ENCODE measurements at regions of chr10 and their contacts with region 1.

Region 1: DNA sequence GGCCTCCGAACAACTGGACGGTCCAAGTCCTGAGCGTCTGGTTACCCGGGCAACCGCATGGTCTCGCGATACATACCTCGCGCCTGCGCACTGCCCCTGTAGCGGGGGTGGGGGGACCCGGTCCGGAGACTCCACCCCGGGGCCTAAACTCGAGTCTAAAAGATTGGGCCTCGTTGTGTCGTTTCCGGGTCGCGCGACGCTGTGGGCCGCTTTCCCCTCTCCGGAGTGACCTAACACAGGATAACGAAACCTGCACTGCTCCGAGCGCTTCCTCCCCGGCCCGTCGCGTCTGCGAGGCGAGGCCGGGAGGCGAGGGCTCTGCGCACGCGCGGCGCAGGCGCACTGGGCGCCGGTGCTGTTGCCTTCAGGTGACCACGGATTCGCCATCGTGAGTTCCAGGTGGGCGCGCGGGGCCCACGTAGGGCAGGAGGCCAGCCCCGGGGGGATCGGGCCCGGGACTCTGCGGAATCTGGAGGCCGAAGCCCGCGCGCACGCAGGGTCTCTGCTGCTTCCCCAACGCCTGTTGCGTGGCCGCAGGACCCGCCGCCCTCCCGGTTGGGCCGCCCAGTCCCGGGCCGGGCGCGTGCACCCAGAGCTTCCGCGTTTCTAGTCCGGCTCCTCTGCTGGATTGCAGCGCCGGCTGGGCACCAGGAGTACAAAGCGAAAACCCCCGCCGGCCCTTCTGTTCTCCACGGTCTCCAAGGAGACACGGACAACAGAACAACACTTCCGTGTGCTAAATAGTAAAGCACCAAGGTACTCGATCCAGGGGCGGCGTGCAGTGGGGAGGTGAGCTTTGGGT is at the start of gene RPP38:
- DNase-seq: peak; percentile 97
- H3K4me3 ChIP-seq: peak within 1 kb of the TSS; percentile 81 to 93
- H3K27ac ChIP-seq: peak within 1 kb of the TSS; percentile 94 to 98
- H3K4me1 ChIP-seq: peaks cover 7% of the 10 kb centered on the region
- H3K27me3 ChIP-seq: no peaks in the 10 kb centered on the region
- CTCF ChIP-seq: peak in 1 of 3 experiments; percentile 3
- POLR2A ChIP-seq: no peak
- total RNA-seq, gene RPP38: 30.3 to 41.4 TPM

Region 2: GRCh38 chr10:14959276-14960057 is 137.7 kb before region 1 on chr10 and contains the start of gene MEIG1:
- intact Hi-C with region 1: loop called (anchors 10 kb)
- DNase-seq: peak; percentile 95
- H3K4me3 ChIP-seq: peak within 1 kb of the TSS; percentile 82
- H3K27ac ChIP-seq: peak within 1 kb of the TSS; percentile 93 to 98
- H3K4me1 ChIP-seq: peaks cover 3% of the 10 kb centered on the region
- H3K27me3 ChIP-seq: no peaks in the 10 kb centered on the region
- CTCF ChIP-seq: no peak
- POLR2A ChIP-seq: no peak
- total RNA-seq, gene MEIG1: 3.6 to 7.8 TPM

Region 3: DNA sequence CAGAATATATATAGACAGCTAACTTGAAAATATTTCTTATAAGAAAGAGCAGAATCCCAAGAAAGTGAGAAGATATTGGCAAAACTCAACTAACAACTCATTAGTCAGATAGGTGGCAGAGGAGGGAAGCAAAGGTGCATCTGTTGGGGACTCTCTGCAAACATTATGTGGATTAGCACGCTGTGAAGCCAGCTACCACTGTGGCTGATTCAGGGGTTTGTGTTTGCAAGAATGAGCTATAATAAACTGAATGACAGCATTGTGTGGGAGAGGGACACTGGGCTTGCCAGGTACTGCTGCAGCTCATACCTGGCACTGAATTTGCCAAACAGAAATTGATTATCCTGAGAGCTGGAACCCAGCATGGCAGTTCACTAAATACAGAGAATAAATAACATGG is 933.4 kb after region 1 on chr10:
- intact Hi-C with region 1: no loop called
- DNase-seq: no peak
- H3K4me3 ChIP-seq: no peak overlapping the region
- H3K27ac ChIP-seq: no peak overlapping the region
- H3K4me1 ChIP-seq: no peaks in the 10 kb centered on the region
- H3K27me3 ChIP-seq: no peaks in the 10 kb centered on the region
- CTCF ChIP-seq: no peak
- POLR2A ChIP-seq: no peak